Left cardiac atrium (tissue), 4 donors: ENCODE measurements at regions of chr15 and their contacts with region 1.

Region 1: DNA sequence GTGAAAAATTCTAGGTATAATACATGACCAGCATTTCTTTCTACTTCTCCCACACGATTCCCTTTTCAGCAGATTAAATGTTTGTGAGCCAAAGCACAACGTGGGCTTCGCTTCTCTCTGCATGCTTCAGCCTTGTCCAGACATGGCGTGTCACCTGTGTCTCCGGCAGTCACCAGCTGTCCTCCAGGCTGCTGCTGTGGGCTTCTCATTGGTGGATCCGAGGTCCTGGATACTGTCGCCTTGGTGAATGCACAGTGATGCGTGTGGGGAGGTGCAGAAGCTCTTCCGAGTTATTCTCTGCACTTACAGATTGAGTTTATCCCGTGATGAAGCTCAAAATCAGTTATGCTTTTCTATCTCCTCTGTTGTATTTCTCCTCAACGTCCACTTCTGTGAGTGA is 23.0 kb upstream of the GOLGA8J start:
- DNase-seq: no peak
- ATAC-seq: no peak

Region 2: GRCh38 chr15:29656636-29657475 is 402.9 kb before region 1 on chr15:
- intact Hi-C with region 1: loop called in 1 of 2 experiments (anchors 5 kb)
- DNase-seq: no peak
- ATAC-seq: peak in 1 of 2 donors; percentile 45